ENCODE measurements at regions of chr17 and their contacts with region 1.

Region 1: GRCh38 chr17:34980681-34981537 is 597 bp downstream of the LIG3 start:
- DNase-seq: peak; percentile 78
- H3K4me3 ChIP-seq: peak overlapping the region; percentile 71 to 85 (median 72)
- H3K27ac ChIP-seq: peak overlapping the region; percentile 90
- H3K4me1 ChIP-seq: peaks cover 12% of the 10 kb centered on the region
- H3K27me3 ChIP-seq: no peaks in the 10 kb centered on the region
- CTCF ChIP-seq: peak; percentile 40 to 48

Region 2: GRCh38 chr17:34199932-34200534 is 780.9 kb before region 1 on chr17:
- CTCF ChIA-PET with region 1: no interaction called
- dilution Hi-C with region 1: no loop called
- in situ Hi-C with region 1: no loop called
- intact Hi-C with region 1: loop called (anchors 2 kb)
- DNase-seq: peak; percentile 50
- H3K4me3 ChIP-seq: no peak overlapping the region
- H3K27ac ChIP-seq: no peak overlapping the region
- H3K4me1 ChIP-seq: no peaks in the 10 kb centered on the region
- H3K27me3 ChIP-seq: no peaks in the 10 kb centered on the region
- CTCF ChIP-seq: peak; percentile 100

Region 3: DNA sequence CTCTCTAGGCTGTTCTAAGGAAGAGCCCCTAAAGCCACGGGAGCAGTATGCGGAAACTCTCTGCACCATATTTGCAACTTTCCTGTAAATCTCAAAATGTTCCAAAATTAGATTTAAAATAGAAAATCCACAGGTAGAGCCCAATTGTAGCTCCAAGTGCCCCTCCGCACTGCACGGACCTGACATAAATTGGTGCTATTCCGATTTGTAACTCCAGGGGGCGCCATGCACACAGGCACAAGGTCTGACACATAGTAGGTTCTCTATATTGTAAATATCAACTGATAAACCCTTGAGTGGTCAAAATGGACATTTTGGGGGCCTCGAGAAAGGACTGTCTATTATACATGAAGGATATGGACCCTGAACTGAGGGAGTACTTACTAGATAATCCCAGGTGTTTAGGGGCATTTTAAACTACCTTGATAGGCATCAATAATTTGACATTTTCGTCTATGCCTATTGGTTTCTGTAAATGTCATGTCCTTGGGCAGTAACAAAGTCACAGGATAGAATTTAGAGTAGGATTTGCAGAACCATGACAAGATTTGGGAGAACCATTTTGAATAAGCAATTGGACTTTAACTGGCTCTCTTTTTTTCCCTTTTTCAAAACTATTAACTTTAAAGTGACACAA is 438.1 kb before region 1 on chr17:
- CTCF ChIA-PET with region 1: no interaction called
- dilution Hi-C with region 1: no loop called
- in situ Hi-C with region 1: no loop called
- intact Hi-C with region 1: loop called (anchors 5 kb)
- DNase-seq: no peak
- H3K4me3 ChIP-seq: no peak overlapping the region
- H3K27ac ChIP-seq: no peak overlapping the region
- H3K4me1 ChIP-seq: no peaks in the 10 kb centered on the region
- H3K27me3 ChIP-seq: no peaks in the 10 kb centered on the region
- CTCF ChIP-seq: peak; percentile 87 to 91

Region 4: GRCh38 chr17:34584805-34585416 is 396.0 kb before region 1 on chr17:
- CTCF ChIA-PET with region 1: no interaction called
- dilution Hi-C with region 1: no loop called
- in situ Hi-C with region 1: no loop called
- intact Hi-C with region 1: loop called (anchors 10 kb)
- DNase-seq: peak; percentile 15
- H3K4me3 ChIP-seq: no peak overlapping the region
- H3K27ac ChIP-seq: no peak overlapping the region
- H3K4me1 ChIP-seq: no peaks in the 10 kb centered on the region
- H3K27me3 ChIP-seq: peaks cover 30% of the 10 kb centered on the region
- CTCF ChIP-seq: peak; percentile 6 to 45

Region 5: DNA sequence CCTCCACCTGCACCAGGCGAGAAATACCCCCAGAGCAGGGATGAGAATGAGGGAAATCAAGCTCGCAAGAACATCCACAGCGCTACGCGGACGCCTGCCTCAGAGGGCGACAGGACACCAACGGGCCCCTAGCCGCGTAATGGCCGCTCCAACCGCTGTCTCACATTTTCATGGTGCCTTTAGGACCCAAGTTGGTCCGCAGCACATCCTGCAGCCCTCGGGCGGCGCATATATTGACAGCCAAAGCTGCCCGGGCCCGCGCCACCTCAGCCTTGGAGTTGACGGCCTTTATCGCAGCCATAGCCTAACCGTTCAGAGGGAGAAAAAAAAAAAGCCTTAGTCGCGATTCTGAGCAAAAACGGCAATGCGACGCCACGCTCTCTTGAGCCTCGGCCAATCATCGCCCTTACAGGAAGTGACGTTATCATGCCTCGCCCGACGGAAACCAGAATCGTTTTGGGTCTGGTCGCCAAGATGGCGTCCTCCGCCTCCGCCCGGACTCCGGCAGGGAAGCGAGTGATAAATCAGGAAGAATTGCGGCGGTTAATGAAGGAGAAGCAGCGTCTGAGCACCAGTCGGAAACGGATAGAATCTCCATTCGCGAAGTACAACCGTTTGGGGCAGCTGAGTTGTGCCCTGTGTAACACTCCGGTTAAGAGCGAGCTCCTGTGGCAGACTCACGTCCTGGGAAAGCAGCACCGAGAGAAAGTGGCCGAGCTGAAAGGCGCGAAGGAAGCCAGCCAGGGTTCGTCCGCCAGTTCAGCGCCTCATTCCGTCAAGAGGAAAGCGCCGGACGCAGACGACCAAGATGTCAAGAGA is 19.6 kb before region 1 on chr17 and contains the starts of genes CCT6B and ZNF830:
- CTCF ChIA-PET with region 1: no interaction called
- dilution Hi-C with region 1: no loop called
- in situ Hi-C with region 1: no loop called
- intact Hi-C with region 1: loop called (anchors 1 kb)
- DNase-seq: peak; percentile 90
- H3K4me3 ChIP-seq: peak within 1 kb of the TSS; percentile 78 to 92 (median 83)
- H3K27ac ChIP-seq: peak within 1 kb of the TSS; percentile 88
- H3K4me1 ChIP-seq: peaks cover 14% of the 10 kb centered on the region
- H3K27me3 ChIP-seq: no peaks in the 10 kb centered on the region
- CTCF ChIP-seq: no peak
- total RNA-seq, gene CCT6B: 3.0 to 3.6 TPM
- total RNA-seq, gene ZNF830: 6.5 to 12.6 TPM

Region 6: GRCh38 chr17:35088881-35089585 is 108.1 kb after region 1 on chr17:
- CTCF ChIA-PET with region 1: no interaction called
- dilution Hi-C with region 1: no loop called
- in situ Hi-C with region 1: loop called in 1 of 2 experiments (anchors 5 kb)
- intact Hi-C with region 1: loop called (anchors 1 kb)
- DNase-seq: peak; percentile 82
- H3K4me3 ChIP-seq: peak overlapping the region; percentile 57 to 80 (median 59)
- H3K27ac ChIP-seq: peak overlapping the region; percentile 84
- H3K4me1 ChIP-seq: peaks cover 44% of the 10 kb centered on the region
- H3K27me3 ChIP-seq: no peaks in the 10 kb centered on the region
- CTCF ChIP-seq: peak; percentile 49 to 66

Region 7: DNA sequence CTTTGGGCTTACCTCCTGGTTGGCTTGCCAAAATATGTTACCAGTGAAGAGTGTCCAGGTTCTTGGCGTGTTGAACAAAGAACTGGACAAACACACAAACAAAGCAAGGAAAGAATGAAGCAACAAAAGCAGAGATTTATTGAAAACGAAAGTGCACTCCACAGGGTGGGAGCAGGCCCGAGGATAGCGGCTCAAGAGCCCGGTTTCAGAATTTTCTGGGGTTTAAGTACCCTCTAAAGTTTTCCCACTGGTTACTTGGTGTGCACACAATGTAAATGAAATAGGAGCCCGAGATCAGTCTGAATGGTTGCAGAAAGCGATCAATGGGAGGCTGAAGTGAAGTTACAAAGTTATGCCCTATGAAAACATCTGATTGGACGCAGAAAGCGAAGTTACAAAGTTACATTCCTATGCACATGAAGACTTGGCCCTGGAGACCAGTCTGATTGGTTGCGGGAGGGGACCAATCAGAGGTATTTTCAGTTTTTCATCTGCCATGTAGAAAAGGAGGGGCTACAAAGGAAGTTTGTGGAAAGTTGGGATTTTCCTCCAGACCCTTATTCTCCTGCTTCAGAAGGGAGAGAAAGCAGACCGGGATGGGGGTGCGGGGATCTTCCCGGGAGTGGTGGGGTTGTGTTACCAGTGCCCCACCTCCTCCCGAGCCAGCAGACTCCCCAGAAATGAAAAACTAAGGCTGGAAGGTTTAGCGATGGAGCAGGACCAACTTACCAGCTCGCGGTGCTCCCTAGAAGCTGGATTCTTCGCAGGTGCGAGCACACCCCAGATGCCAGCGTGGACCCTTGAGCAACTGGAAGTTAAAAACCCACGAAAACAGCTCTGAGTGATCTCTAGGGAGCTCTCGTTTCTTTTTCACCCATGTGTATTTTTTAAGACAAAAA is 451.5 kb after region 1 on chr17 and contains the start of gene SLFN12:
- CTCF ChIA-PET with region 1: no interaction called
- dilution Hi-C with region 1: no loop called
- in situ Hi-C with region 1: no loop called
- intact Hi-C with region 1: loop called (anchors 10 kb)
- DNase-seq: peak; percentile 50
- H3K4me3 ChIP-seq: peak within 1 kb of the TSS; percentile 48 to 81 (median 55)
- H3K27ac ChIP-seq: peak within 1 kb of the TSS; percentile 52
- H3K4me1 ChIP-seq: peaks cover 18% of the 10 kb centered on the region
- H3K27me3 ChIP-seq: no peaks in the 10 kb centered on the region
- CTCF ChIP-seq: no peak
- total RNA-seq, gene SLFN12: 10.8 to 22.2 TPM